ENCODE measurements at regions of chr14 and their contacts with region 1.

Region 1: DNA sequence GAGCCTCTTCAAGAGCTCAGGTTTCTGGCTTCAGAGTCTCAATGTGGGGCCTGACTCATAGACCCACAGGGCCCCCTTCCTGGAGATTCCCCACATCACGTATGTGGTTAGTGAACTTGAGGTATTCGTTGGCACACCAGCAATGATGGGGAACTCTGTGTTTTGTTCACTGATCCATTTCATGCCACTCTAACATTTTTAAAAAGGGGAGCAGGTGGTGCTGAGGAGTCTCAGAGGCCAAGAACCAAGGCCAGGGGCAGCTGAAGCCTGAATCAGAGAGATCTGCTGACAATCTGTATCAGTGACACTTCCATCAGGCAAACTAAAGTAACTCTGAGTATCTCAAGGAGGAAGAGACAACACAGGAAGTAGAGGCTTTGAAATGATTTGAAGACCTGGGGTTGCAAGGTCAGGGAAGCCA is 323.4 kb downstream of the VRK1 start:
- DNase-seq: peak; percentile 86
- H3K4me3 Mint-ChIP-seq: peak overlapping the region; percentile 42
- H3K27ac Mint-ChIP-seq: peak overlapping the region; percentile 98
- H3K4me1 Mint-ChIP-seq: peaks cover 27% of the 10 kb centered on the region
- H3K27me3 Mint-ChIP-seq: no peaks in the 10 kb centered on the region

Region 2: GRCh38 chr14:96962337-96962736 is 158.3 kb before region 1 on chr14:
- CTCF ChIA-PET with region 1: no interaction called
- intact Hi-C with region 1: loop called (anchors 5 kb)
- DNase-seq: peak; percentile 43
- H3K4me3 Mint-ChIP-seq: no peak overlapping the region
- H3K27ac Mint-ChIP-seq: peak overlapping the region; percentile 85
- H3K4me1 Mint-ChIP-seq: peaks cover 60% of the 10 kb centered on the region
- H3K27me3 Mint-ChIP-seq: no peaks in the 10 kb centered on the region

Region 3: GRCh38 chr14:97017399-97017798 is 103.2 kb before region 1 on chr14:
- CTCF ChIA-PET with region 1: no interaction called
- intact Hi-C with region 1: loop called (anchors 5 kb)
- DNase-seq: no peak
- H3K4me3 Mint-ChIP-seq: no peak overlapping the region
- H3K27ac Mint-ChIP-seq: no peak overlapping the region
- H3K4me1 Mint-ChIP-seq: peaks cover 7% of the 10 kb centered on the region
- H3K27me3 Mint-ChIP-seq: no peaks in the 10 kb centered on the region

Region 4: GRCh38 chr14:97177015-97177414 is 56.4 kb after region 1 on chr14:
- CTCF ChIA-PET with region 1: no interaction called
- intact Hi-C with region 1: loop called (anchors 1 kb)
- DNase-seq: peak; percentile 59
- H3K4me3 Mint-ChIP-seq: no peak overlapping the region
- H3K27ac Mint-ChIP-seq: no peak overlapping the region
- H3K4me1 Mint-ChIP-seq: peaks cover 37% of the 10 kb centered on the region
- H3K27me3 Mint-ChIP-seq: no peaks in the 10 kb centered on the region

Region 5: DNA sequence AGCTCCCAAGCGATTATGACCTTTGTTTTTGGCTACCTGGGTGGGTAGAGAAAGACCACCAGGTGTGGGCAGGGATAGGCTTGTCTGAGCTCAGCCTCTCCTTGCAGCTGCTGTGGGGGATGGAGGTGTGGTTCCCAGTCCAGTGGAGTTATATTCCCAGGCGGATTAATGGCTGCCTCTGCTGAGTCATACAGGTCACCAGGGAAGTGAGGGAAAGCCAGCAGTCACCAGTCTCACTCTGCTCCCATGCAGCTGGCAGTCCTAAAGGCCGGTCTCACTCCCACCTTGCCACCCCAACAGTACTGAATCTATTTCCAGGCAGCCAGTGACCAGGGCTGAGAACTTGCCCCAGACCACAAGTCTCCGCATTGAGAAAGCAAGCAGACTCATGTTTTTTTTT is 75.7 kb after region 1 on chr14:
- CTCF ChIA-PET with region 1: no interaction called
- intact Hi-C with region 1: no loop called
- DNase-seq: no peak
- H3K4me3 Mint-ChIP-seq: no peak overlapping the region
- H3K27ac Mint-ChIP-seq: no peak overlapping the region
- H3K4me1 Mint-ChIP-seq: no peaks in the 10 kb centered on the region
- H3K27me3 Mint-ChIP-seq: peaks cover 2% of the 10 kb centered on the region

Region 6: GRCh38 chr14:97713023-97713422 is 592.4 kb after region 1 on chr14:
- CTCF ChIA-PET with region 1: no interaction called
- intact Hi-C with region 1: loop called (anchors 2 kb)
- DNase-seq: peak; percentile 75
- H3K4me3 Mint-ChIP-seq: no peak overlapping the region
- H3K27ac Mint-ChIP-seq: peak overlapping the region; percentile 86
- H3K4me1 Mint-ChIP-seq: peaks cover 56% of the 10 kb centered on the region
- H3K27me3 Mint-ChIP-seq: no peaks in the 10 kb centered on the region